HCT116 (cell line): ENCODE measurements at regions of chr12 and their contacts with region 1.

Region 1: GRCh38 chr12:60494244-60494643 is 898.4 kb downstream of the SLC16A7 start:
- DNase-seq: peak; percentile 31
- ATAC-seq: peak; percentile 77
- H3K4me3 ChIP-seq: no peak overlapping the region
- H3K27ac ChIP-seq: no peak overlapping the region
- H3K4me1 ChIP-seq: no peaks in the 10 kb centered on the region
- H3K27me3 ChIP-seq: no peaks in the 10 kb centered on the region
- CTCF ChIP-seq: peak; percentile 37 to 71 (median 55); a peak in 5 of 6 replicates
- POLR2A ChIP-seq: no peak
- RAD21 ChIP-seq: peak; percentile 69

Region 2: DNA sequence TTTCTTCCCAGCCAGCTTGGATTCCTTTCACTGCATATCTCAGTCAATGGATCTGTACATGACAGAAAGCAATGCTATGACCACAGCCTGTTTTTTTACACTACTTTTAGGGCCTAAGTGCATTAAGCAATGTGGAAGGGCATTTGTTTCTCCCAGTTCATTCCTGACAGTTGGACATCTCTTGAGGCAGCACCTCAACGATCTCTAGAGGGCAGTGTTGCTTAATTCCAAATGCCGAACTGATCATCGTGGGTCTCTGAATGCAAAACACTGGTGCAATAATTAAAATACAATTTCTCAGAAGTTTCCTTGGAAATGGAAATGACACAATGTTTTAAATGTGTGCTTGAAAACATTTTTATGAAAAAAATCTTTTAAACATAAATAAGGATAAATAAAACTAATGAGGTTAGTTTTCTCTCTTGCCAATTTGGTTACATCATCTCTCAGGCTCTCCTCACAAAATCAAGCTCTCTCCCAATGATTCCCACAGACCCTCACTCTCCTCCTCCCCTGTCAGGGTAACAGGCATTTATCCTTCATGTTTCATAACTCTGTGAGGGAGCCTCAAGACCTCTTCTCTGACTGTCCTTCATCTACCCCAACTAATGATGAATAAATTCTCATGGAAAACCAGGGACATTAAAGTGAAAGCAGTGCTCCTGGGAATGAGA is 1090.8 kb before region 1 on chr12:
- CTCF ChIA-PET with region 1: interaction called, 4 read pairs
- POLR2A ChIA-PET with region 1: no interaction called
- RAD21 ChIA-PET with region 1: no interaction called
- intact Hi-C with region 1: loop called (anchors 2 kb)
- DNase-seq: peak; percentile 55
- ATAC-seq: peak; percentile 90
- H3K4me3 ChIP-seq: peak overlapping the region; percentile 13 to 15; a peak in 3 of 4 replicates
- H3K27ac ChIP-seq: no peak overlapping the region
- H3K4me1 ChIP-seq: no peaks in the 10 kb centered on the region
- H3K27me3 ChIP-seq: no peaks in the 10 kb centered on the region
- CTCF ChIP-seq: peak; percentile 50 to 85 (median 82); a peak in 5 of 6 replicates
- POLR2A ChIP-seq: no peak
- RAD21 ChIP-seq: peak; percentile 67

Region 3: DNA sequence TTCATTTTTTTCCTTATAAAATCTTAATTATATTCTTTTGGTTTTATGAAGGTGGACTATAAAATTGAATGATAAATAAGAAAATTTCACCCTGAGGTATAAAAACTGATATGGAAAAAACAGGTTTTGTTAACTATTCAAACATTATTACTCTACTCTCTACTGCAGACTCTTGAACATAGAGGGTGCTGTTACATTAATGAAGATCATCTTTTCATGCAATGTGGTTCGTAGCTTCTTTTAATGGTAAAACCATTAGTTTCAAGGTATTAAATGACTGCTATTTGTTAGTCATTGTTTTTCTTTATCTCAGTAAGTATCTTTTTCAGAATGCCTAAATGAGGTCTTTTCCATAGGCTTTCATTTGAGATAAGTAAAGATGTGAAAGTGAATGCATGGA is 388.0 kb before region 1 on chr12:
- CTCF ChIA-PET with region 1: interaction called, 6 read pairs
- POLR2A ChIA-PET with region 1: no interaction called
- RAD21 ChIA-PET with region 1: no interaction called
- intact Hi-C with region 1: loop called (anchors 10 kb)
- DNase-seq: no peak
- ATAC-seq: no peak
- H3K4me3 ChIP-seq: no peak overlapping the region
- H3K27ac ChIP-seq: no peak overlapping the region
- H3K4me1 ChIP-seq: peaks cover 0 to 3% of the 10 kb centered on the region in 2 experiments; a peak in 1 of 4 replicates
- H3K27me3 ChIP-seq: no peaks in the 10 kb centered on the region
- CTCF ChIP-seq: peak in 2 of 3 experiments; percentile 19 to 42; a peak in 2 of 6 replicates
- POLR2A ChIP-seq: no peak
- RAD21 ChIP-seq: peak; percentile 45; the same call in 1 of the 2 replicates

Region 4: GRCh38 chr12:60257063-60257462 is 237.2 kb before region 1 on chr12:
- CTCF ChIA-PET with region 1: interaction called, 12 read pairs
- POLR2A ChIA-PET with region 1: no interaction called
- RAD21 ChIA-PET with region 1: interaction called in 1 of 2 experiments, 3 read pairs
- intact Hi-C with region 1: loop called (anchors 5 kb)
- DNase-seq: peak; percentile 24
- ATAC-seq: peak; percentile 76
- H3K4me3 ChIP-seq: no peak overlapping the region
- H3K27ac ChIP-seq: no peak overlapping the region
- H3K4me1 ChIP-seq: 0 out of 4 replicates have a peak, but pooled peaks cover 0 to 6% of the 10 kb centered on the region in 2 experiments
- H3K27me3 ChIP-seq: no peaks in the 10 kb centered on the region
- CTCF ChIP-seq: 0 out of 6 replicates have a peak, but pooled peaks have one; percentile 6 to 10 (median 9)
- POLR2A ChIP-seq: no peak
- RAD21 ChIP-seq: peak; percentile 56

Region 5: DNA sequence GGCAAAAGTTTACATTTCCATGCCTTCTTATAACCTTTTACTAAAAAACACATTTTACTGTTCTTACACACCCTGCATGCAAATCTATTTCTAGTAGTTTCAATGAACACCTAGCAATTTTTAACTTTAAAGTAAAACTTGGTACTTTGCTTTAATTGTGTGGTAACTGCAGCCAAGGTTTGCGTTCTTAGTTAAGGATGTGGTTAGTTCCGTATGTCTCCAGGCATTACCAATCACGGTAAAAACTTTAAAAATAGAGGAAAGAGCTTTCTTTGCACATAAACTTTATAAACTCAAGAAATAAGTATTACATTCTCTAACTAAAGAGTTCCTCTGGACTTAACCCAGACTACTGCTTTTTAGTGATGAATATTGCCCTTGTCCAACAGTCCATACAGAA is 103.2 kb before region 1 on chr12:
- CTCF ChIA-PET with region 1: no interaction called
- POLR2A ChIA-PET with region 1: no interaction called
- RAD21 ChIA-PET with region 1: no interaction called
- intact Hi-C with region 1: no loop called
- DNase-seq: no peak
- ATAC-seq: no peak
- H3K4me3 ChIP-seq: no peak overlapping the region
- H3K27ac ChIP-seq: no peak overlapping the region
- H3K4me1 ChIP-seq: peaks cover 0 to 10% of the 10 kb centered on the region in 2 experiments; a peak in 2 of 4 replicates
- H3K27me3 ChIP-seq: no peaks in the 10 kb centered on the region
- CTCF ChIP-seq: no peak
- POLR2A ChIP-seq: no peak
- RAD21 ChIP-seq: no peak

Region 6: GRCh38 chr12:60672949-60673348 is 178.7 kb after region 1 on chr12:
- CTCF ChIA-PET with region 1: no interaction called
- POLR2A ChIA-PET with region 1: no interaction called
- RAD21 ChIA-PET with region 1: no interaction called
- intact Hi-C with region 1: no loop called
- DNase-seq: no peak
- ATAC-seq: no peak
- H3K4me3 ChIP-seq: no peak overlapping the region
- H3K27ac ChIP-seq: no peak overlapping the region
- H3K4me1 ChIP-seq: no peaks in the 10 kb centered on the region
- H3K27me3 ChIP-seq: no peaks in the 10 kb centered on the region
- CTCF ChIP-seq: no peak
- POLR2A ChIP-seq: no peak
- RAD21 ChIP-seq: no peak